Colonic mucosa (tissue), 4 donors: ENCODE measurements at regions of chr6 and their contacts with region 1.

Region 1: DNA sequence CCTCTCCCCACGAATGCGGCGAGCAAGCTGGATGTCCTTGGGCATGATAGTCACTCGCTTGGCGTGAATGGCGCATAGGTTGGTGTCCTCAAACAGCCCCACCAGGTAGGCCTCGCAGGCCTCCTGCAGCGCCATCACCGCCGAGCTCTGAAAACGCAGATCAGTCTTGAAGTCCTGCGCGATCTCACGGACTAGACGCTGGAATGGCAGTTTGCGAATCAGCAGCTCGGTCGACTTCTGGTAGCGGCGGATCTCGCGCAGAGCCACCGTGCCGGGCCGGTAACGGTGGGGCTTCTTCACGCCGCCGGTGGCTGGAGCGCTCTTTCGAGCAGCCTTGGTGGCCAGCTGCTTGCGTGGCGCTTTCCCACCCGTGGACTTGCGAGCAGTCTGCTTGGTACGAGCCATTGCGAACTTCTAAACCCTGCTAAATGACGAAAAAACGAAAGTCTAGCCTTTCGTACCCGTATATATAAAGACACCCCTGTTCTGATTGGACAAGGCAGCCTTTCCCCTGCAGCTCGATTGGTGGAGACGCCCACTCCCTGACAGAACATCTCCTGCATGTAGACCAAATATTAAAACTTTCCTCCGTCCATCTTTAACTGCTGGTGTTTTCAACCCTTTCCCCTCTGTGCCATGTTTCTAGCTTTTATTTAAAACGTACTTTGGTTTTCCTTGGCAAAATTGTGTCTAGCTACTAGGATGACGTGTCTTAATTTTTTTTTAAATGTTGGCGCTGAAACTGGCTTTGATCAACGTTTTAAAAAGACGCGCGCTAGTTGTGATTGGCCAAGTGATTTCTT is 109.8 kb downstream of the HFE start:
- DNase-seq: peak; percentile 88
- H3K4me3 ChIP-seq: peak overlapping the region; percentile 47
- H3K27ac ChIP-seq: peak overlapping the region; percentile 99
- H3K4me1 ChIP-seq: no peaks in the 10 kb centered on the region
- H3K27me3 ChIP-seq: no peaks in the 10 kb centered on the region
- CTCF ChIP-seq: no peak

Region 2: GRCh38 chr6:25927756-25928216 is 269.3 kb before region 1 on chr6:
- intact Hi-C with region 1: no loop called
- DNase-seq: no peak
- H3K4me3 ChIP-seq: no peak overlapping the region
- H3K27ac ChIP-seq: no peak overlapping the region
- H3K4me1 ChIP-seq: no peaks in the 10 kb centered on the region
- H3K27me3 ChIP-seq: no peaks in the 10 kb centered on the region
- CTCF ChIP-seq: no peak

Region 3: DNA sequence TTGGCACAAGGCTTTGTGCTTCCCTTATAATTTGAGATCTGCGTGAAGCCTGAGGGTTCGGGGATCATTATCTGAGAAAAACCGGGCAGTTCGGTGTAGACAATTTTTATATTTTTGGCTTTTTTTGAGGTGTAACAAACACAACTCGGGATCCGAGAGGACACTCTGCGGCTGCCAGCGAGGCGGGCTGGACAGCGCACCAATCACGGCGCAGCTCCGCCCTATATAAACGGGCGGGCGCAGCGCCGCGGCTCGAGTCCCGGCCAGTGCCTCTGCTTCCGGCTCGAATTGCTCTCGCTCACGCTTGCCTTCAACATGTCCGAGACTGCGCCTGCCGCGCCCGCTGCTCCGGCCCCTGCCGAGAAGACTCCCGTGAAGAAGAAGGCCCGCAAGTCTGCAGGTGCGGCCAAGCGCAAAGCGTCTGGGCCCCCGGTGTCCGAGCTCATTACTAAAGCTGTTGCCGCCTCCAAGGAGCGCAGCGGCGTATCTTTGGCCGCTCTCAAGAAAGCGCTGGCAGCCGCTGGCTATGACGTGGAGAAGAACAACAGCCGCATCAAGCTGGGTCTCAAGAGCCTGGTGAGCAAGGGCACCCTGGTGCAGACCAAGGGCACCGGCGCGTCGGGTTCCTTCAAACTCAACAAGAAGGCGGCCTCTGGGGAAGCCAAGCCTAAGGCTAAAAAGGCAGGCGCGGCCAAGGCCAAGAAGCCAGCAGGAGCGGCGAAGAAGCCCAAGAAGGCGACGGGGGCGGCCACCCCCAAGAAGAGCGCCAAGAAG is 40.8 kb before region 1 on chr6:
- intact Hi-C with region 1: loop called (anchors 5 kb)
- DNase-seq: peak; percentile 93
- H3K4me3 ChIP-seq: peak overlapping the region; percentile 50
- H3K27ac ChIP-seq: peak overlapping the region; percentile 98
- H3K4me1 ChIP-seq: no peaks in the 10 kb centered on the region
- H3K27me3 ChIP-seq: no peaks in the 10 kb centered on the region
- CTCF ChIP-seq: no peak

Region 4: DNA sequence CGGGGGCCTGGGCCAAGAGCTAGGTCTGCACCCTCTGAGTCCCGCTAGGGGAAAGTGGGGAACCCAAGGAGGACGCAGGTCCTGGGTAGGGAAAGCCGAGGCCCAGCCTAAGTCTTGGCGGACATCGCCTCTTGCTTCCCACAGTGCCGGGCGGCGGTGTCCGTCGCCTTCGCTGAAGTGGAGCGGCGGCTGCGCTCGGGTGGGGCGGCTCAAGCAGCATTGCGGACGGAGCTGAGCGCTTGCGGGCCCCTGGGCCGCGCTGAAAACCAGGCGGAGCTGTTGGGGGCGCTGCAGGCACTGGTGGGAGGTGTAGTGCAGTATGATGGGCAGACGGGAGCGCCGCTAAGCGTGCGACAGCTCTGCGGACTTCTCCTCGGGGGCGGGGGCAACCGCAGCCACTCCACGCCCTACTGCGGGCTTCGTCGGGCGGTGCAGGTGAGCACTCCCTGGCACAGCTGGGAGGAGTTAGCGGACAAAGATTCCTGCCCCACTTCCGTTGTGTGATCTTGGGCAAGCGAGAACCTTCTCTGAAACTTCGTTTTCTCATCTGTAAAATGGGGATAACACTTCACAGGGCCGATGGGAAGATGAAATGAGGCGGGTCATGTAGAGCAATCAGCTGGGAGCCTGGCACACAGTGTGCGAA is 1054.7 kb after region 1 on chr6:
- intact Hi-C with region 1: no loop called
- DNase-seq: peak; percentile 89
- H3K4me3 ChIP-seq: peak overlapping the region; percentile 73
- H3K27ac ChIP-seq: peak overlapping the region; percentile 97
- H3K4me1 ChIP-seq: no peaks in the 10 kb centered on the region
- H3K27me3 ChIP-seq: peaks cover 6% of the 10 kb centered on the region
- CTCF ChIP-seq: peak; percentile 25